ENCODE measurements at regions of chr2 and their contacts with region 1.

Region 1: GRCh38 chr2:102187496-102188150 is 800 bp downstream of the IL1RL2 start:
- DNase-seq: peak; percentile 72
- ATAC-seq: peak; percentile 87

Region 2: DNA sequence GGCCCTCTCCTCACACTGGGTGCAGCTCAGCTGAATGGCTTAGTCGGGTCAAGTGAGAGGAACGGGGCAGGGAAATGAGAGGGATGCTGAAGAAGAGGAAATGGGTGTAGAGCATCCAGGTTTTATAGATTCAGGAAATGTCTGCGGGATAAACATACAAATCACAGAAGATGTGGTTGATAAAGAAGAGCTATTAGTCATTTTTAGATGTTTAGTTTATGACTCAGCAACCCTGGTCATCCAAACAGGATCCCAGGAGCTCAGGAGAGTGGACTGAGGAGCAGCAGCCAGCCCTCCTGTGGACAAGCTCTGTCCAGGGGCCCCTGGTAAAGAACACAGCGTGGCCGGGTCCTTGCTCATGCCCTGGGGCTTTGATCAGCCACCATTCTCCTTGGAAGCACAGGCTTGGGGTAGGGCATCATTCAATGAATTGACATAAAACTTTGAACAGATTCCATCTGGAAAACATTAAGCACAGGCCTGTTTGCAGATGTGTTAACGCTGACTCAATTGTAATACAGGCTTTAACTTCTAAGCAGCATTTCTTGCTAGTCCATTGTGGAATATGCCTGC is 1284.7 kb before region 1 on chr2:
- intact Hi-C with region 1: loop called (anchors 5 kb)
- DNase-seq: no peak
- ATAC-seq: peak; percentile 90

Region 3: GRCh38 chr2:102155642-102156491 is 31.8 kb before region 1 on chr2:
- intact Hi-C with region 1: no loop called
- DNase-seq: peak; percentile 42
- ATAC-seq: peak; percentile 77

Measured in sciatic nerve (tissue), 2 donors.